Activated CD4-positive, alpha-beta memory T cell treated with anti-CD3 and anti-CD28 coated beads, Interleukin-2, amount 10 ng/mL, durations not matched to agents 7 days and 5 days (primary cell): ENCODE measurements at regions of chr6 and their contacts with region 1.

Region 1: DNA sequence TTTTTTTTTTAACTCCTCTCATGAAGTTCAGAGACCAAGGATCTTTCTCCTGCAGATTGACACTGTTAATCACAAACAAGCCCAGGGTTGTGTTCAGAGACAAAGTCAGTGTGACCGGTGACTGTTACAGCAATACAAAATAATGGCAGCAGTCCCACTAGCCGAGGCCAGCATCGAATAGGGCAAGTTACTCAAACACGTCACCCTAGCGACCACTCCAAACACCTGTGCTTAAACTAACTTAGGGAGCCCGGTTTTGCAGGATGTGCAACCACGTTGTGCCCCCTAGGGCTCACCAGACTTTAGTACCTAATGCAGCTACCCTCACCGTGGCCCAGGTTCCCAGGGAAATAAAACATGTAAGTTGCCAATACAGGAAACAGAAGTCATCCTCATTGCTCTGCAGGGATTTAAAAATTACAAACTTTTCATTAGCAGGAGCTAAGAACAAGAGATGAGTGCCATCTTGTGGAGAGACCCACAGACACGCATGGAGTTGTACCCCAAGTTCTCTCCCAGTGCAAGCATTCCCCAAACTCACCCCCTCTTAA is 38.1 kb downstream of the FAM50B start:
- DNase-seq: no peak
- H3K4me3 Mint-ChIP-seq: no peak overlapping the region
- H3K27ac Mint-ChIP-seq: no peak overlapping the region
- H3K4me1 Mint-ChIP-seq: no peaks in the 10 kb centered on the region
- H3K27me3 Mint-ChIP-seq: no peaks in the 10 kb centered on the region

Region 2: DNA sequence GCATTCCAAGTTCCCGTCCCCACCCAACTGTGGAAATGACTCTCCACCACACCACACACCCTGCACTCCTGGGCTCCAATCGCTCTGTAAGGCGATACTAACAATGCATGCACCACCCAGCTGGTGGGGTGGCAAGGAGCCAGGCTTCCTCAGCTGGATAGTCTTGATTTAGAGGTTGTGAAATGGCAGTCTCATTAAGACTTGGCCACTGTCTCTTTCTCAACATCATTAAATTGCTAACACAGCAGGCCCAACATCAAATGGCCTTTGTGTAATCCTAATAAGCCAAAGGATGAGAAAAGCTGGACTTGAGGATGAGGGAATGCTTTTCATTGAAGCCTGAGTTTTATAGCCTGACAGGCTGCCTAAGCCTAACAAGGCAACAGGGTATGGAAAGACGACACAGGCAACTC is 1865.5 kb before region 1 on chr6:
- CTCF ChIA-PET with region 1: no interaction called
- POLR2A ChIA-PET with region 1: no interaction called
- DNase-seq: no peak
- H3K4me3 Mint-ChIP-seq: no peak overlapping the region
- H3K27ac Mint-ChIP-seq: no peak overlapping the region
- H3K4me1 Mint-ChIP-seq: no peaks in the 10 kb centered on the region
- H3K27me3 Mint-ChIP-seq: no peaks in the 10 kb centered on the region

Region 3: GRCh38 chr6:3748208-3749066 is 138.8 kb before region 1 on chr6:
- CTCF ChIA-PET with region 1: interaction called, 13 read pairs
- POLR2A ChIA-PET with region 1: no interaction called
- DNase-seq: peak; percentile 43
- H3K4me3 Mint-ChIP-seq: no peak overlapping the region
- H3K27ac Mint-ChIP-seq: no peak overlapping the region
- H3K4me1 Mint-ChIP-seq: peaks cover 7% of the 10 kb centered on the region
- H3K27me3 Mint-ChIP-seq: peaks cover 25% of the 10 kb centered on the region